WTC11 (cell line): ENCODE measurements at regions of chr11 and their contacts with region 1.

Region 1: GRCh38 chr11:13145461-13145860 is 132.1 kb upstream of the BMAL1 start:
- DNase-seq: no peak
- ATAC-seq: peak; percentile 75
- H3K4me3 Mint-ChIP-seq: no peak overlapping the region
- H3K27ac Mint-ChIP-seq: no peak overlapping the region
- H3K4me1 Mint-ChIP-seq: 0 out of 2 replicates have a peak, but pooled peaks cover 3% of the 10 kb centered on the region
- H3K27me3 Mint-ChIP-seq: no peaks in the 10 kb centered on the region
- CTCF ChIP-seq: no peak

Region 2: GRCh38 chr11:12727563-12728214 is 417.8 kb before region 1 on chr11:
- CTCF ChIA-PET with region 1: no interaction called
- POLR2A ChIA-PET with region 1: no interaction called
- DNase-seq: no peak
- ATAC-seq: no peak
- H3K4me3 Mint-ChIP-seq: no peak overlapping the region
- H3K27ac Mint-ChIP-seq: peak overlapping the region; percentile 57; the same call in 1 of the 2 replicates
- H3K4me1 Mint-ChIP-seq: peaks cover 79% of the 10 kb centered on the region
- H3K27me3 Mint-ChIP-seq: no peaks in the 10 kb centered on the region
- CTCF ChIP-seq: no peak

Region 3: GRCh38 chr11:13008625-13009475 is 136.6 kb before region 1 on chr11 and contains the start of gene RASSF10:
- CTCF ChIA-PET with region 1: interaction called, 12 read pairs
- POLR2A ChIA-PET with region 1: no interaction called
- DNase-seq: peak; percentile 95
- ATAC-seq: peak; percentile 87
- H3K4me3 Mint-ChIP-seq: peak within 1 kb of the TSS; percentile 81
- H3K27ac Mint-ChIP-seq: peak within 1 kb of the TSS; percentile 96
- H3K4me1 Mint-ChIP-seq: peaks cover 55% of the 10 kb centered on the region
- H3K27me3 Mint-ChIP-seq: peaks cover 63% of the 10 kb centered on the region
- CTCF ChIP-seq: no peak
- total RNA-seq, gene RASSF10: 2.6 to 3.2 TPM (median 2.9 TPM) in 3 replicates

Region 4: GRCh38 chr11:13108416-13108815 is 37.0 kb before region 1 on chr11:
- CTCF ChIA-PET with region 1: no interaction called
- POLR2A ChIA-PET with region 1: no interaction called
- DNase-seq: no peak
- ATAC-seq: no peak
- H3K4me3 Mint-ChIP-seq: no peak overlapping the region
- H3K27ac Mint-ChIP-seq: no peak overlapping the region
- H3K4me1 Mint-ChIP-seq: peaks cover 31% of the 10 kb centered on the region
- H3K27me3 Mint-ChIP-seq: peaks cover 49% of the 10 kb centered on the region
- CTCF ChIP-seq: no peak